Activated CD4-positive, alpha-beta T cell treated with anti-CD3 and anti-CD28 coated beads, Interleukin-2, amount 10 ng/mL, durations not matched to agents 24 days and 14 days (primary cell): ENCODE measurements at regions of chr1 and their contacts with region 1.

Region 1: DNA sequence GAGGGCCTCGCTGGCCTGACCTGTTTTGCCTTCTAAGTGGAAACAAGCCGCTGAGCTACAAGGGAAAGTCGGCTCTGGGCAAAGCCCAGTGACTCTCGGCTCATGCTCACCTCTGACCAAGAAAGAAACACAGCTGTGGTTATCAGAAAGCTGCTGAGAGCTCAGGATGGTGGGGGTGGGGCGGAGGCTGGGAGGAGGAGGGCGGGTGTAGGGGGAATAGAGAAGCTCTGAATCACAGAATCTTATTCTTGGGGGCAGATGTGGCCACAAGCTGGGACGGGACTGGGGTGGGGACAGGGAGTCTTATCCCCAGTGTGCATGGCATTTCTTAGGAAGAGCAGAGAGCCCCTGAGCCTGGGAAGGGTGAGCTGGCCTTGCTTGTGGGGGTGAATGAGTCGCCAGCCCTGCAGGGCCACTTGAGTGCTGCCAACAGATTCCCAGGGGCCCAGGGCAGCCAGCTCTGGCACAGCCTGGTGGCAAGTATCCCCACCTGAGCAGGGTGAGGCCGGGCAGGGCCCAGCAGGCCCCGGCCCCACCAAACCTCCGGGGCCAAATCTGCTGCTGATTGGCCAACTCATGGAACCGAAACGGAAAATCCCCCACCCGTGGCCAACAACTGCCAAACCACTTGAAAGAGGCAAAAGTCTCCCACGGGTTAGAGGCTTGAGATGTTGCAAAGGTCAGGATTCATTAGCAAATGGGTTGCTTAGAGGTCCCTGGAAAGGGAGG is 120.6 kb downstream of the SPSB1 start:
- DNase-seq: peak; percentile 85
- H3K4me3 Mint-ChIP-seq: peak overlapping the region; percentile 65
- H3K27ac Mint-ChIP-seq: peak overlapping the region; percentile 77
- H3K4me1 Mint-ChIP-seq: peaks cover 46% of the 10 kb centered on the region
- H3K27me3 Mint-ChIP-seq: peaks cover 12% of the 10 kb centered on the region

Region 2: GRCh38 chr1:9428601-9429341 is 15.5 kb after region 1 on chr1:
- intact Hi-C with region 1: loop called (anchors 1 kb)
- DNase-seq: peak; percentile 100
- H3K4me3 Mint-ChIP-seq: peak overlapping the region; percentile 97
- H3K27ac Mint-ChIP-seq: peak overlapping the region; percentile 97
- H3K4me1 Mint-ChIP-seq: peaks cover 45% of the 10 kb centered on the region
- H3K27me3 Mint-ChIP-seq: peaks cover 13% of the 10 kb centered on the region